Natural killer cell (primary cell): ENCODE measurements at regions of chr21 and their contacts with region 1.

Region 1: GRCh38 chr21:14382835-14383594 is at the start of gene HSPA13:
- DNase-seq: peak; percentile 97 to 99
- ATAC-seq: peak; percentile 92 to 99 (median 94)
- H3K4me3 ChIP-seq: peak within 1 kb of the TSS; percentile 66
- H3K4me3 Mint-ChIP-seq: peak within 1 kb of the TSS; percentile 100
- H3K27ac ChIP-seq: peak within 1 kb of the TSS; percentile 91
- H3K27ac Mint-ChIP-seq: peak within 1 kb of the TSS; percentile 100
- H3K4me1 ChIP-seq: no peaks in the 10 kb centered on the region
- H3K4me1 Mint-ChIP-seq: peaks cover 25 to 26% of the 10 kb centered on the region in 2 donors
- H3K27me3 ChIP-seq: no peaks in the 10 kb centered on the region
- H3K27me3 Mint-ChIP-seq: no peaks in the 10 kb centered on the region
- CTCF ChIP-seq: no peak
- total RNA-seq, gene HSPA13: 17.0 to 23.8 (median 22.7) TPM

Region 2: DNA sequence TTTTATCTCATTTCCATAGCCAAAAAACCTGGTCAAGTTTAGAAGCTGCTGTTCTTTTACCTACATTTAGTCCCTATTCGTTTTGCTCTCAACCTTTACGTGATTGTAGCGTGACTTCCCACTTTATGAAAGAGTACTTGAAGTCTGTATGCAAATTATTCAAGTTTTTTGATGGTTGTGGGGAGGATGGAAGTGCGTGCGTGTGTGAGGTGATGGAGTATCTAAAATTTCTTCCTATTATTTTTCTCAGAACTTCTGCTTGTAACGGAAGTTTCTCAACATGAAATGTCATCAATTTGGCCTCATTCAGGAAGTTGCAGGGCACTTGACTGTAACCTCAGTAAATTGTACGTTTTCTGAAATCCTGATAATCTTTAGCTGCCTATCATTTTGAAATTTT is 99.2 kb after region 1 on chr21:
- intact Hi-C with region 1: no loop called
- DNase-seq: peak in 1 of 2 donors; percentile 72
- ATAC-seq: peak; percentile 66 to 85 (median 76)
- H3K4me3 ChIP-seq: no peak overlapping the region
- H3K4me3 Mint-ChIP-seq: peak overlapping the region; percentile 79
- H3K27ac ChIP-seq: peak overlapping the region; percentile 73
- H3K27ac Mint-ChIP-seq: peak overlapping the region; percentile 77 to 82
- H3K4me1 ChIP-seq: peaks cover 12% of the 10 kb centered on the region
- H3K4me1 Mint-ChIP-seq: peaks cover 16 to 18% of the 10 kb centered on the region in 2 donors
- H3K27me3 ChIP-seq: no peaks in the 10 kb centered on the region
- H3K27me3 Mint-ChIP-seq: no peaks in the 10 kb centered on the region
- CTCF ChIP-seq: no peak

Region 3: GRCh38 chr21:14533504-14534428 is 150.8 kb after region 1 on chr21:
- intact Hi-C with region 1: loop called (anchors 2 kb)
- DNase-seq: peak in 1 of 2 donors; percentile 84
- ATAC-seq: peak; percentile 83 to 87 (median 85)
- H3K4me3 ChIP-seq: peak overlapping the region; percentile 19
- H3K4me3 Mint-ChIP-seq: peak overlapping the region; percentile 82
- H3K27ac ChIP-seq: peak overlapping the region; percentile 93
- H3K27ac Mint-ChIP-seq: peak overlapping the region; percentile 93 to 95
- H3K4me1 ChIP-seq: peaks cover 8% of the 10 kb centered on the region
- H3K4me1 Mint-ChIP-seq: peaks cover 37 to 60% of the 10 kb centered on the region in 2 donors
- H3K27me3 ChIP-seq: no peaks in the 10 kb centered on the region
- H3K27me3 Mint-ChIP-seq: no peaks in the 10 kb centered on the region
- CTCF ChIP-seq: no peak